MCF 10A (cell line): ENCODE measurements at regions of chr15 and their contacts with region 1.

Region 1: GRCh38 chr15:60592371-60593169 is 113.6 kb upstream of the ICE2 start:
- DNase-seq: peak; percentile 66
- H3K4me3 Mint-ChIP-seq: peak overlapping the region; percentile 67
- H3K27ac Mint-ChIP-seq: no peak overlapping the region
- H3K4me1 Mint-ChIP-seq: peaks cover 11% of the 10 kb centered on the region
- H3K27me3 Mint-ChIP-seq: no peaks in the 10 kb centered on the region
- CTCF ChIP-seq: no peak

Region 2: DNA sequence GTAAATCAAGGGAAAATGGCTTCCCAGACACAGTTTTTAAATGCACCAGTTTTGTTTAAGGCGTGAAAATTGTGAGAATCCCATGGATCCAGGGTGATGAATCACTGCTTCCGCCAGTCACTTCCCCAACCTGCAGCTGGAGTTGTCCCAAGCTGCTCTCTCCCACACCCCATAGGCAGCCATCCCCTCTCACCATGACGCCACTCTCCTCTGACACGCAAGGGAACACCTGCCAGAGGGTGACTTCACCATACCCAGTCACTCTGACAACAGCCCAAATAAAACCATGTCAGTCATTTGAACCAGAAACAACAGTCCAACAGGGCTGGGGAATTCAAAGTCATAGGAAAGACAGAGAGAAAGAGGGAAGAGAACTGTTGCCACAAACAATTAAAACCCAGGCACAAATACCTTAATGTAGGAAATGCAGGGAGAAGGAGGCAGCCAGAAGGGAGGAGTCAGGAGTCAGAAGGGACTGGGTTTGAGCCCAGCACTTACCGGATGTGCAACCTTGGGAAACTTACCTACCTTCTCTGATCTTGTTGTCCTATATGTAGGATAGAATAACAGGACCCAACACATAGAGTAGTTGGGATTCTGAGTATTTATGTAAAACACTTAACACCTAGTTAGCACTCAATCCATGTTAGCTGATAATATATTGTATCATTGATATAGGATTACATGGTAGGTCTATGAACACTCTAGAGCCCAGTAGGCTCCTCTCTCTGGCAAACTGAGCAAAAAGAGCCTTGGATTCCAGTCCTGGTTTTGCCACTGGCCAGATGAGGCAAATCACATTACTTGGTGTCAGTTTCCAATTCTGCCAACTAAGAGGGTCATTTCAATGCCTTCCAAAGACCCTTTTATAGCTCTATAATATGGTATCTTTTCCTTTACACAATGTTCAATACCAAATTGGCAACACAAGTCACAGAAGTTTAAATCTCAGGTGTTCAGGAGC is 212.7 kb after region 1 on chr15:
- CTCF ChIA-PET with region 1: no interaction called
- POLR2A ChIA-PET with region 1: no interaction called
- intact Hi-C with region 1: loop called (anchors 10 kb)
- DNase-seq: peak; percentile 88
- H3K4me3 Mint-ChIP-seq: no peak overlapping the region
- H3K27ac Mint-ChIP-seq: peak overlapping the region; percentile 1
- H3K4me1 Mint-ChIP-seq: peaks cover 6% of the 10 kb centered on the region
- H3K27me3 Mint-ChIP-seq: peaks cover 17% of the 10 kb centered on the region
- CTCF ChIP-seq: no peak